ENCODE measurements at regions of chr15 and their contacts with region 1.

Region 1: GRCh38 chr15:48877630-48878595 is at the start of gene EID1:
- DNase-seq: peak; percentile 96
- ATAC-seq: peak; percentile 91
- H3K4me3 Mint-ChIP-seq: peak within 1 kb of the TSS; percentile 98
- H3K27ac Mint-ChIP-seq: peak within 1 kb of the TSS; percentile 99
- H3K4me1 Mint-ChIP-seq: peaks cover 45% of the 10 kb centered on the region
- H3K27me3 Mint-ChIP-seq: peaks cover 7% of the 10 kb centered on the region
- total RNA-seq, gene EID1: 73.6 to 82.5 TPM

Region 2: GRCh38 chr15:48507416-48508065 is 370.4 kb before region 1 on chr15:
- CTCF ChIA-PET with region 1: no interaction called
- POLR2A ChIA-PET with region 1: no interaction called
- intact Hi-C with region 1: no loop called
- DNase-seq: peak; percentile 16
- ATAC-seq: no peak
- H3K4me3 Mint-ChIP-seq: no peak overlapping the region
- H3K27ac Mint-ChIP-seq: no peak overlapping the region
- H3K4me1 Mint-ChIP-seq: no peaks in the 10 kb centered on the region
- H3K27me3 Mint-ChIP-seq: no peaks in the 10 kb centered on the region

Region 3: GRCh38 chr15:48810414-48811317 is 67.2 kb before region 1 on chr15 and contains the start of gene CEP152:
- CTCF ChIA-PET with region 1: interaction called, 4 read pairs
- POLR2A ChIA-PET with region 1: interaction called, 8 read pairs
- intact Hi-C with region 1: loop called (anchors 1 kb)
- DNase-seq: peak; percentile 98
- ATAC-seq: peak; percentile 97
- H3K4me3 Mint-ChIP-seq: peak within 1 kb of the TSS; percentile 79
- H3K27ac Mint-ChIP-seq: peak within 1 kb of the TSS; percentile 95
- H3K4me1 Mint-ChIP-seq: peaks cover 24% of the 10 kb centered on the region
- H3K27me3 Mint-ChIP-seq: no peaks in the 10 kb centered on the region
- total RNA-seq, gene CEP152: 34.4 to 42.2 TPM

Region 4: DNA sequence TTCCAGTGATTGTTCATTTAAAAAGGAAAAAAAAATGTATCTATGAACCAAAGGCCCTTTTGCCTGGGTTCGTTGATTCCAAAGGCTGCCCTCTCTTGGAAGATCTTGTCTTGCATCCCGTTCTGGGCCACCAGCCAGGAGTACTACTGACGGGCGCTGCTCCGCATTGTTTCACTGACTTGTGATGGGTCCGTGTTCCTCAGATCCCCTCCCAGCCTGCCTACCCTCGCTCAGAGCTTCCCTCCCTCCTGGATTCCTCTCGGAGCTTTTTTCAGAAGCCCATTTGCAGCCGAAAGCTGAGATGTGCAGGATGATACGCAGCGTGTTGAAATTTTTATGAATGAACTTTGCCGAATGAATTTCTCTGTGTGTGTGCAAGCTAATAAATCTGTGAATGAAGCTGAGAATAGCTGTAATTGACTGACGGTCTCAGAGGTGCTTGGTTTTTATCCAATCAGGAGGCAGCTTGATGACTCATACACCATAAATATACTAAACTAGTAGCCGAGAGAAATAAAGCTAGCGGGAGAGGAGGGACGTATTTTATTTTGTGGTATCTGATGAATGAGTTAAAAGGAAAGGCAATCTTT is 85.7 kb after region 1 on chr15 and contains the start of gene SHC4:
- CTCF ChIA-PET with region 1: interaction called, 4 read pairs
- POLR2A ChIA-PET with region 1: interaction called, 3 read pairs
- intact Hi-C with region 1: loop called (anchors 1 to 5 kb)
- DNase-seq: peak; percentile 29
- ATAC-seq: peak; percentile 45
- H3K4me3 Mint-ChIP-seq: peak within 1 kb of the TSS; percentile 69
- H3K27ac Mint-ChIP-seq: peak within 1 kb of the TSS; percentile 84
- H3K4me1 Mint-ChIP-seq: peaks cover 34% of the 10 kb centered on the region
- H3K27me3 Mint-ChIP-seq: peaks cover 38% of the 10 kb centered on the region
- total RNA-seq, gene SHC4: 1.4 TPM

Region 5: GRCh38 chr15:49046220-49047102 is 168.5 kb after region 1 on chr15 and contains the start of gene SECISBP2L:
- CTCF ChIA-PET with region 1: no interaction called
- POLR2A ChIA-PET with region 1: interaction called, 3 read pairs
- intact Hi-C with region 1: loop called (anchors 1 to 5 kb)
- DNase-seq: peak; percentile 95
- ATAC-seq: peak; percentile 97
- H3K4me3 Mint-ChIP-seq: peak within 1 kb of the TSS; percentile 92
- H3K27ac Mint-ChIP-seq: peak within 1 kb of the TSS; percentile 84
- H3K4me1 Mint-ChIP-seq: peaks cover 22% of the 10 kb centered on the region
- H3K27me3 Mint-ChIP-seq: no peaks in the 10 kb centered on the region
- total RNA-seq, gene SECISBP2L: 22.4 to 36.8 TPM

Region 6: GRCh38 chr15:49620658-49621368 is 742.9 kb after region 1 on chr15 and contains the starts of genes DTWD1 and FAM227B:
- CTCF ChIA-PET with region 1: no interaction called
- POLR2A ChIA-PET with region 1: no interaction called
- intact Hi-C with region 1: loop called (anchors 2 to 5 kb)
- DNase-seq: peak; percentile 96
- ATAC-seq: peak; percentile 98
- H3K4me3 Mint-ChIP-seq: peak within 1 kb of the TSS; percentile 86
- H3K27ac Mint-ChIP-seq: peak within 1 kb of the TSS; percentile 88
- H3K4me1 Mint-ChIP-seq: peaks cover 36% of the 10 kb centered on the region
- H3K27me3 Mint-ChIP-seq: no peaks in the 10 kb centered on the region
- total RNA-seq, gene DTWD1: 20.4 to 22.4 TPM
- total RNA-seq, gene FAM227B: 2.7 to 4.4 TPM